ENCODE measurements at regions of chr16 and their contacts with region 1.

Region 1: GRCh38 chr16:82755569-82756282 is 129.0 kb downstream of the CDH13 start:
- DNase-seq: no peak

Region 2: DNA sequence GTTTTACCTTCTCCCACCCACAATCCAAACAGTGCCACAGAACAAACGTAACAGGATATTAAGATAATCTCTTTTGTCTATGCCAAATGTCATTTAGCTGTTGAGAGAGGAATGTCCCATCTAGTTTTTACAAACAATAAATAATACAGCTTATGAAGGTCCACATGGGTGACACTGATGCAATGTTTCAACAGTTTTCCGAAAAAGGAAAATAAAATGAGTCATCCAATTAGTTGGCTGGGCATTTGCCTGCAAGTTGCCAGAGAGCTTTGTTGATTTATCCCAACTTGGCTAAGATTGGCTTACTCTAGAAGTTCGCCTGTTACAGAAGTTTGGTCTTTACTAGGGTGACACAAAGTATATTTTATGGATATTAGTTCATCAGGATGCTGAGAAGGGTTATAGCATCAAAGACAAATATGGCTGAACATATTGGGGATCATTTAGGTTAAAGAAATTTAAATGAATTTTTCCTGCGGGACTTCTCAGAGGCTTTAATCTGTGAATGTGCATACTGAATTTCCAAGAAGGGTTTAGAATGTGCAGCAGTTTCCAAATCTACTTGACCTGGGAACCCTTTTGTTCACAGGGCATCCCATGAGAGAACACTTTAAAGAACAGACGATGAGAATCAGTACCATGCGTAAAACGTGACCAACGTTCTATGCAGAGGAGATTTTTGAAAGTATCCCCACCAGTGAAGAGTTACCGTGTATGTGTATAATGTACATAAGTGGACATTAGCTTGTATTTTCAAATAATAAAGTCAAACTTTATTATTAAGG is 55.8 kb before region 1 on chr16:
- intact Hi-C with region 1: loop called (anchors 10 kb)
- DNase-seq: no peak